Endothelial cell of umbilical vein (primary cell): ENCODE measurements at regions of chr11 and their contacts with region 1.

Region 1: DNA sequence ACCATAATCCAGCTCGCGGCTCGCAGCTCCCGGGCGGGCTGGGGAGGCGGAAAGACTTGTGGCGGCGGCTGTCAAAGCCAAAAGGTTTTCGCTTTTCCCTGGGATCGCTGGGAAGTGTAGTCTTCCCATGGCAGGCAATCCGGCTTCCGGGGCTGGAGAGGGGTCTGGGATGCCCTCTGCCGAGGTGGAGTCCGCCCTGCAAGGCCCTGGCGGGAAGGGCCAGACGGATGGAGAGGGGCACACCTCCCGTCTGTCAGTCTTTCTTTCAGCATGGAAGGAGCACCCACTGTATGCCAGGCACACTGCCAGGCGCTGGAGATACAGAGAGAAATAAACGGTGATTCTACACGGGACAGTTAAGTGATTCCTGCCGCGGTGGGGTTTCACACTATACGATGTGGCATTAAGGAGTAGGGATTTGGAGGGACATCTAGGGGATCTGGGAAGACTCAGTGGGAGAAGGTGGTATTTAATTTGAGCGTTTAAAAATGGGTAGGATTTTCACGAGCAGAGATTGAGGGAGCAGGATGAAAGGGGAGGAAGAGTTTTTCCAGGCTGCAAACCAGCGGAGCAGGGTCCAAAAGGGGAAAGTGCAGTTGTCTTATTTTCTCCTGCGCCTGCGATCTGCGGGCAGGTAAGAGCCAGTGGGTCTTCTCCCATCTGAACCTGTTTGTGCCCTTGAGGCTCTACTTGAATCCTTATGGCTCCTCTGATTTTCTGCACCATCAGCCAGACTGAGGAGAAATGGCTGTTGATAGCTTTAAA is at the start of gene BACE1:
- DNase-seq: peak; percentile 82
- H3K4me3 ChIP-seq: peak within 1 kb of the TSS; percentile 3 to 68 (median 41)
- H3K27ac ChIP-seq: peak within 1 kb of the TSS; percentile 34
- H3K4me1 ChIP-seq: peaks cover 14% of the 10 kb centered on the region
- H3K27me3 ChIP-seq: no peaks in the 10 kb centered on the region
- CTCF ChIP-seq: peak in 1 of 2 donors; percentile 29
- POLR2A ChIP-seq: peak; percentile 47
- total RNA-seq, gene BACE1: 28.8 and 29.3 TPM in 2 replicates

Region 2: GRCh38 chr11:117232092-117232878 is 84.1 kb before region 1 on chr11 and contains the start of gene RNF214:
- CTCF ChIA-PET with region 1: interaction called, 5 read pairs
- POLR2A ChIA-PET with region 1: no interaction called
- dilution Hi-C with region 1: no loop called
- intact Hi-C with region 1: loop called (anchors 1 kb)
- DNase-seq: peak; percentile 79
- H3K4me3 ChIP-seq: peak within 1 kb of the TSS; percentile 82 to 97 (median 90)
- H3K27ac ChIP-seq: peak within 1 kb of the TSS; percentile 89
- H3K4me1 ChIP-seq: peaks cover 20% of the 10 kb centered on the region
- H3K27me3 ChIP-seq: no peaks in the 10 kb centered on the region
- CTCF ChIP-seq: peak; percentile 81 to 99
- POLR2A ChIP-seq: peak; percentile 49
- total RNA-seq, gene RNF214: 26.1 and 28.2 TPM in 2 replicates

Region 3: DNA sequence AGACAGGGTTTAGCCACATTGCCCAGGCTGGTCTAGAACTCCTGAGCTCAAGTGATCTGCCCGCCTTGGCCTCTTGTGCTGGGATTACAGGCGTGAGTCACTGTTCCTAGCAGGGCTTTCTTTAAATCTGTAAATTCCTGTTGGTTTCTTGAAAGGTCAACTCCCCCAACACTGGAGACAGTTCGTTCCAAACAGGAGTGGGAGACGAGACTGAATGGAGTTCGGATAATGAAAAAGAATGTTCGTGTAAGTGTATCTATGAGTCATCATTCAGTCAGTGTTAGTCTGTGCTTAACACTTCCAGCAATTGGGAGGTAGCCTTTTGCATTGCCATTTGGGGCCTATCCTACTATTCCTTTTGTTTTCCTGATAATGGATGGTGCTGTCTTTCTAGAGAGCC is 35.2 kb before region 1 on chr11:
- CTCF ChIA-PET with region 1: interaction called, 3 read pairs
- POLR2A ChIA-PET with region 1: no interaction called
- dilution Hi-C with region 1: no loop called
- intact Hi-C with region 1: loop called (anchors 2 kb)
- DNase-seq: peak; percentile 90
- H3K4me3 ChIP-seq: no peak overlapping the region
- H3K27ac ChIP-seq: peak overlapping the region; percentile 57
- H3K4me1 ChIP-seq: peaks cover 21% of the 10 kb centered on the region
- H3K27me3 ChIP-seq: no peaks in the 10 kb centered on the region
- CTCF ChIP-seq: no peak
- POLR2A ChIP-seq: no peak

Region 4: GRCh38 chr11:117327567-117328374 is 11.4 kb after region 1 on chr11 and contains the start of gene CEP164:
- CTCF ChIA-PET with region 1: interaction called, 8 read pairs
- POLR2A ChIA-PET with region 1: no interaction called
- dilution Hi-C with region 1: no loop called
- intact Hi-C with region 1: loop called (anchors 1 kb)
- DNase-seq: peak; percentile 95
- H3K4me3 ChIP-seq: peak within 1 kb of the TSS; percentile 62 to 79 (median 78)
- H3K27ac ChIP-seq: peak within 1 kb of the TSS; percentile 48
- H3K4me1 ChIP-seq: peaks cover 9% of the 10 kb centered on the region
- H3K27me3 ChIP-seq: no peaks in the 10 kb centered on the region
- CTCF ChIP-seq: no peak
- POLR2A ChIP-seq: peak; percentile 85
- total RNA-seq, gene CEP164: 39.5 and 48.4 TPM in 2 replicates

Region 5: GRCh38 chr11:117932067-117932370 is 615.6 kb after region 1 on chr11:
- CTCF ChIA-PET with region 1: no interaction called
- POLR2A ChIA-PET with region 1: no interaction called
- dilution Hi-C with region 1: no loop called
- intact Hi-C with region 1: no loop called
- DNase-seq: no peak
- H3K4me3 ChIP-seq: no peak overlapping the region
- H3K27ac ChIP-seq: no peak overlapping the region
- H3K4me1 ChIP-seq: no peaks in the 10 kb centered on the region
- H3K27me3 ChIP-seq: peaks cover 2 to 8% of the 10 kb centered on the region in 2 experiments
- CTCF ChIP-seq: no peak
- POLR2A ChIP-seq: no peak